Activated T-helper 2 cell treated with anti-CD3 and anti-CD28 coated beads, Interferon-gamma antibody, Interleukin-2, Interleukin-4, amounts not matched to agents 10 μg/mL and 5 μg/mL and 100 μg/mL, durations not matched to agents 14 hours and 24 hours and 36 hours (primary cell): ENCODE measurements at regions of chr1 and their contacts with region 1.

Region 1: DNA sequence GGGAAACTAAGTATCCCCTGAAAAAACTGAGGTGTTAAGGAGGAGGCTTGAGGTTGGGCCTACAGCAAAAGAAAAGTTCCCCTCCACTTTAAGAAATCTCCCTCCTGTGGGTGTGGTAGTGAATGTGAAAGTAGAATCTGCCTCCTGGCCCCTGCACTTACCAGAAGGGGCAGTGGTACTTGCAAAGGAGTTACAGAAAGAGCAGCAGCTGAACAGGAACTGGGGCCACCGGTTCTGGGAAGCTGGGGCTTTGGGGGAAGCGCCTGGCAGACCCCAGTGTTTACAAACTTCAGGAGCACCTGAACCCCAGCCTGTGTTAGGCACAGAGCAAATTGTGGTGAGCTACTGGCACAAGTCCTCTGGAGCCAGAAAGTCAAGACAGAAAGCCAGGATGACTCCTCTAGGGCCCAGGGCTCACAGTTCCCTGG is 250.2 kb upstream of the FGGY start:
- DNase-seq: peak; percentile 40
- H3K4me3 Mint-ChIP-seq: peak overlapping the region; percentile 40
- H3K27ac Mint-ChIP-seq: peak overlapping the region; percentile 90
- H3K4me1 Mint-ChIP-seq: peaks cover 52% of the 10 kb centered on the region
- H3K27me3 Mint-ChIP-seq: no peaks in the 10 kb centered on the region

Region 2: DNA sequence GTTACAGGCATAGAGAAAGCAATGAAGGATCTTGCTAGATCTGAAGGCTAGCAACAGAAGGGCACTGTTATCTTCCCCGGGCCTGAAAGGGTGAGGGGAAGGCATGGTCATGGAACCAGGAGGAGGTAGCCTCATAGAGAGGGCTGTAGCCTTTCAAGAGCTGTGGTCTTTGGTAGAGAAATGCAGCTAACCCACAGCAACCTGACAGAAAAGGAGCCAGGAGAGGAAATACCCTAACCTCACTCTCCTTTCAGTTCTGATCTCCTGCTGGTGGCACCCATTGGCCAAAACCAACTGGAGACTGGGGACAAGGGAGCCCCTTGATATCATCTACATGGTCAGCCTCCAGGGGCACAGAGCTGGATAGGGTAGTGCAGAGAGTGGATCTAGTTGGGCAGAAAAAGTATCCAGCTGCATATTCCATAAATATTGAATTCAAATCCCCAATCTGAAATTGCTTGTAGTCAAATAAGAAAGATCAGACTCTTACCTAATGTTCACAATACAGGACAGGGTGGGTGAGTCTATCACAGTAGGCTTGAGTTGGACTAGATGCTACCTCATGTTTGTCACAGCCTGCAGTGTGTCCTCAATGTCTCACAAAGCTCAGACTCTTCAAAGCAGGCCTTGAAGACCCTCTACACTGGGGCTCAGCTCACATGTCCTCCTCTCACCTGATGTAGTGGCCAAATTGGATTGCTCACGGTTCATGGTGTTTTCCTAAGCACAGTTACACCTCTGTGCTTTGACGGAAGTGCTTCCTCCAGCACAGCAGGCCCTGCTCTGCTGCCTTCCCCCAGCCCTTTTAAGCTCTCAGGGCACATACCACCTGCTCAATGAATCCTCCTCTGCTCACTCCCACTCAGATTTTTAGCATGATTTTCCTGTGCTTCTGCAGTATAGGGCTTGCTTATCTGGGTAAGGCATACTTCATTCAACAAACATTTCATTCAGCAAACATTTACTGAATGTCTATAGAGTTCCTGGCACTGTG is 188.8 kb before region 1 on chr1:
- intact Hi-C with region 1: loop called (anchors 5 kb)
- DNase-seq: peak; percentile 17
- H3K4me3 Mint-ChIP-seq: no peak overlapping the region
- H3K27ac Mint-ChIP-seq: peak overlapping the region; percentile 83
- H3K4me1 Mint-ChIP-seq: peaks cover 31% of the 10 kb centered on the region
- H3K27me3 Mint-ChIP-seq: no peaks in the 10 kb centered on the region

Region 3: GRCh38 chr1:59296358-59297256 is 249.9 kb after region 1 on chr1 and contains the start of gene FGGY:
- intact Hi-C with region 1: loop called (anchors 2 kb)
- DNase-seq: peak; percentile 85
- H3K4me3 Mint-ChIP-seq: peak within 1 kb of the TSS; percentile 93
- H3K27ac Mint-ChIP-seq: peak within 1 kb of the TSS; percentile 88
- H3K4me1 Mint-ChIP-seq: peaks cover 36% of the 10 kb centered on the region
- H3K27me3 Mint-ChIP-seq: no peaks in the 10 kb centered on the region
- total RNA-seq, gene FGGY: 10.5 and 13.4 TPM in 2 replicates